Mammary epithelial cell (primary cell): ENCODE measurements at regions of chr20 and their contacts with region 1.

Region 1: DNA sequence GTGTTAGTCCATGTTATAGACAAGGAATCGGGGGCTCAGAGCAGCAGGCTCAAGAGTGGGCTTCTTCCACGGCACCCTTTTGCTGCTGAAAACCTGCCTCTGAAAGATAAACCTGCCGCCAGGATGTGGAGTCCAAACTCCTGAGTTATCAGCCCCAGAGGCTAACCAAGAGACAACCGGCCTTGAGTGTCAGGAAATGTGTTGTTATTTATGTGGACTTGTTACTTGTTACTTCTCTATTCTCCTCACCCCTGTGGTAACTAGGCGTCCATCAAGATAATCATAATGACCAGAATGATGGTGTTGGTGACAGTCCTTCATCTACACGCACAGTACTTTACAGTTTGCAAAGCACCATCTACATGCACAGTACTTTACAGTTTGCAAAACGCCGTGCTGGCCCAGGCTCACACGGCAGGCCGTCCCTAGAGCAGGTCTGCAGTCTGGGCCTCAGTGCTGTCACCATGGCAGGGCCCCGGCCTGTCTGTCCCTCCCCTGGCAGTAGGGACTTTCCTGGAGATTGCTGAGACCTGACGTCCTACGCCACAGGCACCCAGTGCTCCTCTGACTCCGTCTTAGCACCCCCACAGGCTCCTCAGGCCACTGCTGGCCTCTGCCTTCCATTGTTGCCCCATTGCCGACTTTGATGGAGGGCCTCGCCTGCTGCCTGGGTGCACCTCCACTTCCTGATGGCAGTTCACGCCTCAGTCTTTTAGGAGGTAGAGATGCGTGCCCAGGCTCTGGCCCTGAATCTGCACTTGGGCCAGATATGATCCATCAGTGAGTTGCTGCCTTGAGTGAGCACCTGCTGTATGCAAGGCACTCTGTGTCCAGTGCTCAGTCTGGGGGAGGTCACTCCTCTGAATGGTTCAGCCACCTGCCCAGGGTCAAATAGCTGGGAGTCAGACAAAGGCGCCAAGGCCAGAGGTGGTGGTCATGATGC is 9.1 kb upstream of the BPIFB4 start:
- DNase-seq: no peak
- H3K4me3 ChIP-seq: no peak overlapping the region
- H3K27ac ChIP-seq: no peak overlapping the region
- H3K4me1 ChIP-seq: no peaks in the 10 kb centered on the region
- H3K27me3 ChIP-seq: no peaks in the 10 kb centered on the region
- CTCF ChIP-seq: no peak

Region 2: GRCh38 chr20:33037456-33037855 is 32.9 kb before region 1 on chr20:
- CTCF ChIA-PET with region 1: no interaction called
- dilution Hi-C with region 1: loop called (anchors 5 kb)
- in situ Hi-C with region 1: no loop called
- intact Hi-C with region 1: no loop called
- DNase-seq: no peak
- H3K4me3 ChIP-seq: no peak overlapping the region
- H3K27ac ChIP-seq: no peak overlapping the region
- H3K4me1 ChIP-seq: no peaks in the 10 kb centered on the region
- H3K27me3 ChIP-seq: no peaks in the 10 kb centered on the region
- CTCF ChIP-seq: no peak

Region 3: GRCh38 chr20:33162753-33163152 is 92.4 kb after region 1 on chr20:
- CTCF ChIA-PET with region 1: no interaction called
- dilution Hi-C with region 1: loop called (anchors 5 kb)
- in situ Hi-C with region 1: no loop called
- intact Hi-C with region 1: no loop called
- DNase-seq: no peak
- H3K4me3 ChIP-seq: no peak overlapping the region
- H3K27ac ChIP-seq: no peak overlapping the region
- H3K4me1 ChIP-seq: no peaks in the 10 kb centered on the region
- H3K27me3 ChIP-seq: no peaks in the 10 kb centered on the region
- CTCF ChIP-seq: no peak

Region 4: DNA sequence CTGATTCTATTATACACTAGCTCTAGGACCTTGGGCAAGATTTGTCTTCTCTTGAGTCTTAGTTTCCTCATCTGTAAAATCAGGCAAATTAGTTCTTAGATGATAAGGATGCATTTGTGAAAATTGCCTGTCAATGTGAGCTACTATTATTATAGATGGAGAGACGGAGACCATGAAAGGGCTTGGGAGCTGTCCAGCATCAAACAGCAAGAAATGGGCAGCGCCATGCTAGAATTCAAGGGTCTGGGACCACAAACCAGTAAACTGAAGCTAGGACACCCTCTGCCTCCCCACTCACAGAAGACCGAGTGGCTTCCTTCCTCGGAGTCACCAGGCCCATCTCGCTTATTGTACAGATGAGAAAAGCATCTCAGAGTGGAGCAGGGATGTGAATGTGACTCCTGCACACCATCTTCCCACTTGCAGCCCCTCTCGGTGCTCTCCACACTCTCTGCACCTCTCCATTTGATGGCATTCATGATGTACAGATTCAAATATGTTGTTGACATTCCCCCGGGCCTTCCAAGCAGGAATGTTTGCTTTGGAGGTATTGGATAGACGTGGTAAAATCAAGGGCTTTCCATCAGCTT is 122.6 kb after region 1 on chr20:
- CTCF ChIA-PET with region 1: no interaction called
- dilution Hi-C with region 1: no loop called
- in situ Hi-C with region 1: no loop called
- intact Hi-C with region 1: no loop called
- DNase-seq: no peak
- H3K4me3 ChIP-seq: no peak overlapping the region
- H3K27ac ChIP-seq: no peak overlapping the region
- H3K4me1 ChIP-seq: no peaks in the 10 kb centered on the region
- H3K27me3 ChIP-seq: no peaks in the 10 kb centered on the region
- CTCF ChIP-seq: no peak